Sigmoid colon (tissue), 7 donors: ENCODE measurements at regions of chr15 and their contacts with region 1.

Region 1: DNA sequence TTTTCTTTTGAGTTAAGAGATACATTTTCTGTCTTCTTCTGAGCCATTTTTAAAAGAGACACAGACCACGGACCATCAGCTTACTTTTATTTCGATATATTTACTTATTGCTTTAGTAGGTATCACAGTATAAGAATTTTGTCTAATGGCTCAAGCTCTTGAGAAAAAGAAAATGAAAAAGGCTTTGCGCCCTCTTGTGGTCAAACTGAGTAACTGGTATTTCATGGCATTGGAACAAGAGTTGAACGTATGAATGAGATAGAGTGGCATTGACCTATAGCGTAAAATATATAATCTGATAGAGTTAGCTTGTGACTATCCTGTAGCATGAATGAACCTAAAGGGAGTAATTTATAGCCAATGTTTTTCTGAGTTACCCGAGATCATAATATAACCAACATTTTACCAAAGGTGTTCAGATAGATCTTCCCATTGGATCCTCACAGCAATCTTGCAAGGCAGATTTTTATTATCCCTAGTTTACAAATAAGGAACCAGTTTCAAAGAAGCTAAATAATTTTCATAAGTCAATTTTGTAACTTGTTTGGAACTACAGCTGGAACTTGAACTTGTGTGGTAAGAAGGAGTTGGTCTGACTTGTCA is 154.6 kb downstream of the POLR2M start:
- DNase-seq: no peak
- H3K4me3 ChIP-seq: no peak overlapping the region
- H3K27ac ChIP-seq: peak overlapping the region in 2 of 4 donors; percentile 25 to 55
- H3K4me1 ChIP-seq: peaks cover 0 to 10% (median 4%) of the 10 kb centered on the region in 4 donors
- H3K27me3 ChIP-seq: no peaks in the 10 kb centered on the region
- CTCF ChIP-seq: peak; percentile 32 to 85 (median 78)
- EP300 ChIP-seq: no peak
- POLR2A ChIP-seq: no peak

Region 2: GRCh38 chr15:57561041-57561711 is 300.0 kb before region 1 on chr15:
- intact Hi-C with region 1: loop called (anchors 2 kb)
- DNase-seq: peak; percentile 86
- H3K4me3 ChIP-seq: no peak overlapping the region
- H3K27ac ChIP-seq: peak overlapping the region in 3 of 4 donors; percentile 15 to 33 (median 23)
- H3K4me1 ChIP-seq: peaks cover 0 to 14% (median 10%) of the 10 kb centered on the region in 4 donors
- H3K27me3 ChIP-seq: no peaks in the 10 kb centered on the region
- CTCF ChIP-seq: peak; percentile 60 to 94 (median 91)
- EP300 ChIP-seq: no peak
- POLR2A ChIP-seq: no peak

Region 3: DNA sequence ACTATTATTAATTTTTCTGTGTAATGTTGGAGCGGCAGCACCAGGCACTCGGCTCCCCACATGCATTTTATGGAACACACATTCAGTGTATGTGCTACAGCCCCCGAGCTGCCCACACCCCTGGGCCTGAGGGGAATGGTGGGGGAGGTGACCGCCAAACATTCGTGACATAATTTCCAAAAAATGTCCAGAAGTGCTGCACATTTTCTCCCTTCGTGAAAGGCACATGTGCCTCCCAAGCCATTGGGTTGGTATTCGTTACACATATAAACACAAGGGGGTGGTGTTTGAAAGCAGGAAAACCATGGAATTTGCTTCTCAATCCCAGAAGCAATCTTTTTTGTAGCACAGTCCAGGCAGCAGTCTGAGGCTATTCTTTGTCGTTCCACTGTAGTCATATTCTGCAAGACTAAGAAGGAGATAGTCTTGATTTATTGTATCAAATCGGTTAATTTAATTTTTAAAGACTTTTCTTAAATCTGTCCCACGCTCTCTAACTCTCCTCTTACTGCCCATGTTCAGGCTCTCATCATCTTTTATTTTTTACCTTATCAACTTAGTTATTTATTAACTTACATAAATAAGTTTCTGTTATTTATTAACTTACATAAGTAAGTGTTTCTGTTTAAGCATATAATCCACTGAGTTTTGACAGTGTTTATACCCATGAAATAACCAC is 193.8 kb before region 1 on chr15:
- intact Hi-C with region 1: loop called (anchors 2 kb)
- DNase-seq: no peak
- H3K4me3 ChIP-seq: no peak overlapping the region
- H3K27ac ChIP-seq: peak overlapping the region in 2 of 4 donors; percentile 38 to 61
- H3K4me1 ChIP-seq: peaks cover 0 to 15% (median 9%) of the 10 kb centered on the region in 4 donors
- H3K27me3 ChIP-seq: no peaks in the 10 kb centered on the region
- CTCF ChIP-seq: peak in 2 of 4 experiments; percentile 15 to 48
- EP300 ChIP-seq: no peak
- POLR2A ChIP-seq: no peak

Region 4: GRCh38 chr15:57732526-57733331 is 128.4 kb before region 1 on chr15:
- intact Hi-C with region 1: loop called (anchors 5 kb)
- DNase-seq: no peak
- H3K4me3 ChIP-seq: no peak overlapping the region
- H3K27ac ChIP-seq: no peak overlapping the region
- H3K4me1 ChIP-seq: peaks cover 0 to 27% (median 4%) of the 10 kb centered on the region in 4 donors
- H3K27me3 ChIP-seq: no peaks in the 10 kb centered on the region
- CTCF ChIP-seq: peak in 3 of 4 experiments; percentile 42 to 81 (median 64)
- EP300 ChIP-seq: no peak
- POLR2A ChIP-seq: no peak

Region 5: GRCh38 chr15:57751177-57751800 is 109.8 kb before region 1 on chr15:
- intact Hi-C with region 1: loop called (anchors 2 kb)
- DNase-seq: no peak
- H3K4me3 ChIP-seq: no peak overlapping the region
- H3K27ac ChIP-seq: peak overlapping the region in 2 of 4 donors; percentile 63 to 72
- H3K4me1 ChIP-seq: peaks cover 0 to 23% (median 13%) of the 10 kb centered on the region in 4 donors
- H3K27me3 ChIP-seq: no peaks in the 10 kb centered on the region
- CTCF ChIP-seq: peak in 3 of 4 experiments; percentile 18 to 46 (median 19)
- EP300 ChIP-seq: no peak
- POLR2A ChIP-seq: no peak

Region 6: DNA sequence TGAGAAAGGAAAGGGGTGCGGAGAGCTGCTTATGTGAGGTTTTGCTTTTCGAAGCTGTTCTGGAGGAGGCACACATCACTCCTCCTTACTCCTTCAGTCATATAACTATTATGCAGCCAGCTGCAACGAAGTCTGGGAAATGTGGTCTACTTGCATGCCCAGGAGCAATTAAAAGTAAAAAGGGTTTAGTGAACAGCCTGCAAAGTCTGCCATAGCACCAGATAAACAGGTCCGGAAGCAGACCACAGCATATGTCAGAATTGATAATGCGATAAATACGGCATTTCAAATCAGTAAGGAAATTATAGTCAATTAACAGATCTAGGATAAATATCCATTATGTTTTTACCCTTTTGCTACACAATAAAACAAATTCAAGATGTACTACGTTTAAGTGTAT is 55.1 kb before region 1 on chr15:
- intact Hi-C with region 1: no loop called
- DNase-seq: no peak
- H3K4me3 ChIP-seq: no peak overlapping the region
- H3K27ac ChIP-seq: no peak overlapping the region
- H3K4me1 ChIP-seq: no peaks in the 10 kb centered on the region
- H3K27me3 ChIP-seq: no peaks in the 10 kb centered on the region
- CTCF ChIP-seq: no peak
- EP300 ChIP-seq: no peak
- POLR2A ChIP-seq: no peak

Region 7: GRCh38 chr15:57969354-57969753 is 108.2 kb after region 1 on chr15:
- intact Hi-C with region 1: no loop called
- DNase-seq: no peak
- H3K4me3 ChIP-seq: no peak overlapping the region
- H3K27ac ChIP-seq: no peak overlapping the region
- H3K4me1 ChIP-seq: no peaks in the 10 kb centered on the region
- H3K27me3 ChIP-seq: no peaks in the 10 kb centered on the region
- CTCF ChIP-seq: no peak
- EP300 ChIP-seq: no peak
- POLR2A ChIP-seq: no peak